Caco-2 (cell line): ENCODE measurements at regions of chr5 and their contacts with region 1.

Region 1: GRCh38 chr5:10801931-10802659 is 41.1 kb upstream of the DAP start:
- DNase-seq: peak in 1 of 2 experiments; percentile 11
- H3K4me3 ChIP-seq: no peak overlapping the region
- H3K4me3 Mint-ChIP-seq: no peak overlapping the region
- H3K27ac Mint-ChIP-seq: no peak overlapping the region
- H3K4me1 ChIP-seq: no peaks in the 10 kb centered on the region
- H3K4me1 Mint-ChIP-seq: no peaks in the 10 kb centered on the region
- H3K27me3 ChIP-seq: peaks cover 2% of the 10 kb centered on the region
- H3K27me3 Mint-ChIP-seq: peaks cover 18% of the 10 kb centered on the region
- CTCF ChIP-seq: no peak

Region 2: GRCh38 chr5:10695055-10695649 is 106.9 kb before region 1 on chr5:
- CTCF ChIA-PET with region 1: no interaction called
- POLR2A ChIA-PET with region 1: no interaction called
- intact Hi-C with region 1: loop called (anchors 1 kb)
- DNase-seq: peak; percentile 53 to 63
- H3K4me3 ChIP-seq: no peak overlapping the region
- H3K4me3 Mint-ChIP-seq: no peak overlapping the region
- H3K27ac Mint-ChIP-seq: no peak overlapping the region
- H3K4me1 ChIP-seq: peaks cover 16% of the 10 kb centered on the region; the same call in 1 of the 2 replicates
- H3K4me1 Mint-ChIP-seq: peaks cover 14% of the 10 kb centered on the region
- H3K27me3 ChIP-seq: no peaks in the 10 kb centered on the region
- H3K27me3 Mint-ChIP-seq: no peaks in the 10 kb centered on the region
- CTCF ChIP-seq: peak; percentile 62 to 67